Common myeloid progenitor, CD34-positive (primary cell): ENCODE measurements at regions of chr4 and their contacts with region 1.

Region 1: GRCh38 chr4:112266821-112267220 is 18.9 kb downstream of the TIFA start:
- DNase-seq: peak; percentile 44 to 74 (median 67)
- H3K4me3 ChIP-seq: no peak overlapping the region
- H3K27ac ChIP-seq: no peak overlapping the region
- H3K4me1 ChIP-seq: no peaks in the 10 kb centered on the region
- H3K27me3 ChIP-seq: no peaks in the 10 kb centered on the region

Region 2: DNA sequence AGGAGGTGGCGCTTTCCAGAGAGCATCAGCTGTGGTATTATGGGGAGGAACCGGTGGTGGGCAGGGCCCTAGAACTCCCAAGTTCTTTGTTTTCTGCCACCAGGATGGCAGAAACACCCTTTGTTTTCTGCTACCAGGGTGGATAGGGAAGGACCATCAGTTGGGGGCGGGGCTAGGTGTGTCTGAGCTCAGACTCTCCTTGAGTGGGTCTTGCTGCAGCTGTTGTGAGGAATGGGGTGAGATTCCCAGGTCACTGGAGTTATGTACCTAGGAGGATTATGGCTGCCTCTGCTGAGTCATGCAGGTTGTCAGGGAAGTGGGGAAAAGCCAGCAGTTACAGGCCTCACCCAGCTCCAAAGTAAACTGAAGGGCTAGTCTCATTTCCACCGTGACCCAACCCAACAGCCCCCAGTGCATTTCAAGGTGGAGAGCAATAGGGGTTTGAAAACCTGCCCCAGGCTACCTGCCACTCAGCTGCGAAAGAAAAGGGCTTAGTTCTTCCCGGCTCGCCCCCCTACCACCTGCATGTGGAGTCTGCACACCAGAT is 289.3 kb before region 1 on chr4:
- CTCF ChIA-PET with region 1: no interaction called
- POLR2A ChIA-PET with region 1: no interaction called
- DNase-seq: no peak
- H3K4me3 ChIP-seq: no peak overlapping the region
- H3K27ac ChIP-seq: no peak overlapping the region
- H3K4me1 ChIP-seq: peaks cover 0 to 3% (median 0%) of the 10 kb centered on the region in 4 experiments
- H3K27me3 ChIP-seq: no peaks in the 10 kb centered on the region

Region 3: DNA sequence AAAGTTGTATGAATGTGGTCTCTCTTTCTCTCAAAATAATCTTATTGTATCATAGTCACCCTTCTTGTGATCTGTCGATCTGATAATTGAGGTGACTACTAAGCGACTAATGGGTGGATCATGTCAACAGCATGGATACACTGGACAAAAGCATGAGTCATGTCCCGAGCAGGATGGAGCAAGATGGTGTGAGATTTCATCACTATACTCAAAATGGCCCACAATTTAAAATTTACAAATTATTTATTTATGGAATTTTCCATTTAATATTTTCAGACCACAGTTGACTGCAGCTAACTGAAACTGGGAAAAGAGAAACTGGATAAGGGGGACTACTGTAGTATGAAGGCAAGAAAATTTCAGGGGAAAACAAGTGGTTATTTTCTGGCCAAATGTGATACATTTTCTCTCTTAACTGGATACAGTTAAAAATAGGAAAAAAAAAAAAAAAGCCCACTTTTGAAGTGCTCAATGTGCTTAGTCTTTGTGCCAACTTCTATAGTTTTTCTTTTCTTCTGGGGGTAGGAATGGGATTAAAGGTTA is 96.3 kb before region 1 on chr4:
- CTCF ChIA-PET with region 1: no interaction called
- POLR2A ChIA-PET with region 1: no interaction called
- DNase-seq: peak in 2 of 3 donors; percentile 40 to 58
- H3K4me3 ChIP-seq: no peak overlapping the region
- H3K27ac ChIP-seq: no peak overlapping the region
- H3K4me1 ChIP-seq: peaks cover 0 to 7% (median 4%) of the 10 kb centered on the region in 4 experiments
- H3K27me3 ChIP-seq: no peaks in the 10 kb centered on the region

Region 4: GRCh38 chr4:112284662-112285411 is 18.0 kb after region 1 on chr4:
- CTCF ChIA-PET with region 1: interaction called, 10 read pairs
- POLR2A ChIA-PET with region 1: interaction called, 3 read pairs
- DNase-seq: peak in 2 of 3 donors; percentile 44 to 60
- H3K4me3 ChIP-seq: peak overlapping the region; percentile 72 to 96 (median 85)
- H3K27ac ChIP-seq: peak overlapping the region; percentile 59 to 84
- H3K4me1 ChIP-seq: peaks cover 22 to 53% (median 42%) of the 10 kb centered on the region in 4 experiments
- H3K27me3 ChIP-seq: no peaks in the 10 kb centered on the region